ENCODE measurements at regions of chr6 and their contacts with region 1.

Region 1: DNA sequence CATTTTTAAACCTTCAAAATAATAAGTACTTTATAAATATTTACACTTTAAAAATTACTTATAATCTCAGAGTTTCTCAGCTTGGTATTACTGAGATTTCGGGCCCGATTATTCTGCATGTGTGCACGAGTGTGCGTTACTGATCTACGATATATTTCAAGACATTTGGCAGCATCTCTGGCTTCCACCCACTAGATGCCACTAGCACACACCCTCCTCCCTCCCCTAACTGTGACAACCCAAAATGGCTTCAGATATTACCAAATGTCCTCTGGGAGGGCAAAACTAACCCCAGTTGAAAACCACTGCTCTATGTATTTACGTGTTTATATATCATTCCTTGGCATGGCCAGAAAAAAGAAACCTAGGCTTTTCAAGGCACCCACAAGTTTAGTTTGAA is 95.9 kb downstream of the FYN start:
- DNase-seq: no peak
- ATAC-seq: peak; percentile 33

Region 2: DNA sequence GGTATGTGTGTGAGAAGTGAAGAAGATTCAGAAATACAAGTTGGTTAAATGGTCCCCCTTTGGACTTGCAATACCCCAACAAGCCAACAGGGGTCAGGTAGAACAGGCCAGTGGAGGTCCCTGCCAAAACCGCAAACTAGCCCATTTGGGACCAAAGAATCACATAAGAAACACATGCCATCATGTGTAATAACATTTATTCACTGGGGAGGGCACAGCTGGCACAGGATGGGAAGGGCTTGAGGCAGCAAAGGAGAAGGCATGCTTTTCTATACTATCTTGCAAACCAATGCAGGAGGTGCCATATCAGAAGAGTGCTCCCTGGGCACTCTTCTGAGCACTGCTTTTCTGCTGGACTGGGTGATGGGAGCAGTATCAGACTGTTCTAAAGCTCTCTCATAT is 55.6 kb before region 1 on chr6:
- intact Hi-C with region 1: loop called (anchors 10 kb)
- DNase-seq: no peak
- ATAC-seq: peak; percentile 7

Measured in left ventricle myocardium superior (tissue), 1 donor.